ENCODE measurements at regions of chr3 and their contacts with region 1.

Region 1: GRCh38 chr3:72391659-72392058 is 456.6 kb downstream of the SHQ1 start:
- DNase-seq: no peak
- H3K4me3 Mint-ChIP-seq: no peak overlapping the region
- H3K27ac Mint-ChIP-seq: no peak overlapping the region
- H3K4me1 Mint-ChIP-seq: peaks cover 9% of the 10 kb centered on the region
- H3K27me3 Mint-ChIP-seq: no peaks in the 10 kb centered on the region

Region 2: DNA sequence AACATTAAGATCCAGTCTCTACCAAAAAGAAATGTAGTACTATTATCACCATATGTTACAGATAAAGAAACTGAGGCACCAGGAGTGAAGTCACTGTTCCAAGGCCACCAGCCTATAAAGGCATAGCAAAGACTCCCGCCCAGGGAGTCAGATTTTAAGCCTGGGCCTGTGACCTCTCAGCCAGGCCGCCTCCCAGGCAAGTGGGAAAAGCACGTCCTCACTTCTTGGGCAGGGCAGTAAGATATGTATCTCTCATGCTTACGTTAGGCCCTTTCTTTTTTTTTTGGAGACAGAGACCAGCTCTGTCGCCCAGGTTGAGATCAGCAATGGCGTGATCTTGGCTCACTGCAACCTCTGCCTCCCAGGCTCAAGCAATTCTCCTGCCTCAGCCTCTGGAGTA is 334.4 kb after region 1 on chr3:
- CTCF ChIA-PET with region 1: interaction called, 10 read pairs
- POLR2A ChIA-PET with region 1: no interaction called
- DNase-seq: no peak
- H3K4me3 Mint-ChIP-seq: no peak overlapping the region
- H3K27ac Mint-ChIP-seq: no peak overlapping the region
- H3K4me1 Mint-ChIP-seq: peaks cover 9% of the 10 kb centered on the region
- H3K27me3 Mint-ChIP-seq: no peaks in the 10 kb centered on the region